ENCODE measurements at regions of chr19 and their contacts with region 1.

Region 1: DNA sequence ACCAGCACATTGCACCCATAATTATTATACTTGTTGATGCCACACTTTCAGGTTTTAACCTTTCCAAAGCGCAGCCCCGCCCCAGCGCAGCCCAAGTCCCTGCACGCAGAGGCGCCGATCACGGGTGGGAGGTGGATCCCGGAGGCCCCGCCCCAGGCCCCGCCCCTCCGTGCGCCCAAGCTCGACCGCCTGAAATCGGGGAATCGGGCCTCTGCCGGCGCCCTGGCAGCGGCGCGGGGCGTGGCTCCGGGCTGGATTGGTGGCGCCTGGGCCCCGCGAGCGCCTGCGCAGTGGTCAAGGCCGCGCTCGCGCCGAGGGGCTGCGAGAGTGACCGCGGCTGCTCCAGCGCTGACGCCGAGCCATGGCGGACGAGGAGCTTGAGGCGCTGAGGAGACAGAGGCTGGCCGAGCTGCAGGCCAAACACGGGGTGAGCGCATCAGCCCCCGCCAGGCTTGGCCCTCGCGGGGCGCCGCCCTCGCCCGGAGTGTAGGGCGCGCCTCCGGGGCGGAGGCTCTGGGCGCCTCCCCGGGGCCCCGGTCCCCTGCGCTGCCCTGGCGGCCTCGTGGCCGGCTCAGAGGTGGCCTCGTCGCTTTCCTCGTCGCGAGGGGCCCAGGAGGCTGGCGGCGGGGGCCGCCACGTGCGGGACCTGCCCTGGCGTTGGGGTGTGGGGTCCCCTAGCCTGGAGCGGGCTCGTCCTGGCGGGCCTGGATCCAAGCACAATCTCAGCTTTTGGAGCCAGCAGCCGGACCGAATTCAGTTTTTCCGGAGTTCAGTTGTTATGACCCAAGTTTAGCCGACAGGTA is at the start of gene PDCD5:
- DNase-seq: peak; percentile 98
- H3K4me3 Mint-ChIP-seq: peak within 1 kb of the TSS; percentile 93
- H3K27ac Mint-ChIP-seq: peak within 1 kb of the TSS; percentile 90
- H3K4me1 Mint-ChIP-seq: peaks cover 24% of the 10 kb centered on the region
- H3K27me3 Mint-ChIP-seq: peaks cover 8% of the 10 kb centered on the region
- total RNA-seq, gene PDCD5: 213 and 231 TPM in 2 replicates

Region 2: DNA sequence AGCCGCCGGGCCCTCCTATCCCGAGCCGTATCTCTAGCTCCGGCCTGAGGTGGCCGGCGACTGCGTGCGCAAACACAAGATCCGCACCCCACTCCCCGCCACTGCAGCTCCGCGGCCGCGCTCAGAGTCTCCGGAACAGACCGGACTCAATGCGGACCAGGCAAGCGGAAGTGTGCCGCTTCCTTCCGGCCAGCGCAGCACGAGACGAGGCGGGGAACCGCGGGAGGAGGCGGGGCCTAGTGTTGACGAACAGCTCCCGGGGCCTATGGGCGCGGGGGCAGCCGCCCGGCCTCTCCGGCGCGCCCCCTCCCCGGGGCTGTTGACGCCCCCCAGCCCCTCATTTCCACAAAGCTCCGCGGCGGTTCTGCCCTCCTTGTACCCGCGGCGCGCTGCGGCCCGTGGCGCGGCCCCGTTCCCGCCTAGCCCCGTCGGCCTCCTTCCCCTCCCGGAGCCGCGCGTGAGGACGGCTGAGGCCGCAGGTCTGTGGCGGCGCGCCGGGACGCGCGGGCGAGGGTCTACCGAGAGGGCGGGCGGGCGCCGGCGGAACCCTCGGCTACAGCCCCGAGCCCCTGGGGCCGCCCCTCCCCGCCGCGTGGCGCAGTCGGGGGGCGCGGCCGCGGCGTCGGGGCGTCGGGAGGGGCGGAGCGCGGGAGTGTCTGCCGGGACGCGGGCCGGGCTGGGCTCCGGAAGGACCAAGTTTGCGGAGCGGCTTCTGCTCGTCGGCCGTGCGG is 175.5 kb before region 1 on chr19 and contains the start of gene DPY19L3:
- intact Hi-C with region 1: loop called (anchors 5 kb)
- DNase-seq: peak; percentile 98
- H3K4me3 Mint-ChIP-seq: peak within 1 kb of the TSS; percentile 89
- H3K27ac Mint-ChIP-seq: peak within 1 kb of the TSS; percentile 90
- H3K4me1 Mint-ChIP-seq: peaks cover 6% of the 10 kb centered on the region
- H3K27me3 Mint-ChIP-seq: no peaks in the 10 kb centered on the region
- total RNA-seq, gene DPY19L3: 19.1 and 19.5 TPM in 2 replicates